MCF 10A (cell line): ENCODE measurements at regions of chr10 and their contacts with region 1.

Region 1: DNA sequence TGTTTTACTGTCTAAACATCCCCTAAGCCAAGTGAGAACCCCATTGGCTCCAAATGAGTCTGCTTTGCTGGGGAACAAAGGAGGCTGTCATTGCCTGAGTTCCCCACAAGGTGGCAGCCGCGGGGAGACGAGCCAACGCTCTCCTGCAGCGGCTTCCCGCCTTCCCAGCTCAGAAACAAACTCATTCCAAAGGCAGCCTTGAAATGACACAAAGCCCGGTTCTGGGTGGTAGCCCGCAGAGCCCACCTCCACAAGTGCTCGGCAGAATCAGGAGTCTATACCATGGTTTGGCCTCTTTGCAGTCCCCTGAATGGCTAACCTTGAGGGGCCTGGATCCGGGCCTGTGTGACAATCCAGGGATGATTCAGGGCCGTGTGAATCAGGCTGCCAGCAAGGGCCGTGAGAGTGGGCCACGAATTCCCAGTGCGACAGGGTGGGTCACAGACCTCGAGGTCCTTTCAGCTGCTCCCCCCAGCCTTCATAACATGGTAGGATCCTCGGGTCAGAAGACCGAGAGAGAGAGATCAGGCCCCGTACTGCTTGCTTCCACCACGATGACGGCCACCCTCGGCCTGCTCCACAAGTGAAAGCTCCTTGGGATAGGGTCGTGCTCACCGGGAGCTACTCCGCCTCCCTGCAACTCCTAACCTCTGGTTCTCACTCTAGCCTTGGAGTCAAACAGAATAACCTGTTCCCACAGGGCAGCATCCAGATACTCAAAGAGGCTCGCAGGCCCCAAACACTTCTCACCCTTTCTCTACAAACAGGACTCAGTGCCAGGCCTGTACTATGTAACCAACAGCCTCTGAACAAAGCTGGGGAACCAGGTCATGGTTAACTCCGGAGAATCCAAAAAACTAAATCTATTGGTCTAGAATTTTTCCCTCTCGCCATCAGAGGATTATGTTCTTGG is 79.6 kb downstream of the DLG5 start:
- DNase-seq: peak; percentile 79
- H3K4me3 Mint-ChIP-seq: peak overlapping the region; percentile 56
- H3K27ac Mint-ChIP-seq: peak overlapping the region; percentile 78
- H3K4me1 Mint-ChIP-seq: peaks cover 55% of the 10 kb centered on the region
- H3K27me3 Mint-ChIP-seq: no peaks in the 10 kb centered on the region
- CTCF ChIP-seq: peak; percentile 94

Region 2: GRCh38 chr10:77857254-77857653 is 10.3 kb after region 1 on chr10:
- CTCF ChIA-PET with region 1: interaction called, 16 read pairs
- POLR2A ChIA-PET with region 1: interaction called, 33 read pairs
- intact Hi-C with region 1: no loop called
- DNase-seq: peak; percentile 86
- H3K4me3 Mint-ChIP-seq: peak overlapping the region; percentile 61
- H3K27ac Mint-ChIP-seq: peak overlapping the region; percentile 85
- H3K4me1 Mint-ChIP-seq: peaks cover 32% of the 10 kb centered on the region
- H3K27me3 Mint-ChIP-seq: no peaks in the 10 kb centered on the region
- CTCF ChIP-seq: no peak

Region 3: GRCh38 chr10:77873536-77874380 is 26.8 kb after region 1 on chr10:
- CTCF ChIA-PET with region 1: interaction called, 5 read pairs
- POLR2A ChIA-PET with region 1: interaction called, 385 read pairs
- intact Hi-C with region 1: loop called (anchors 2 kb)
- DNase-seq: peak; percentile 98
- H3K4me3 Mint-ChIP-seq: peak overlapping the region; percentile 63
- H3K27ac Mint-ChIP-seq: peak overlapping the region; percentile 85
- H3K4me1 Mint-ChIP-seq: peaks cover 71% of the 10 kb centered on the region
- H3K27me3 Mint-ChIP-seq: no peaks in the 10 kb centered on the region
- CTCF ChIP-seq: no peak

Region 4: GRCh38 chr10:77889277-77889903 is 42.4 kb after region 1 on chr10:
- CTCF ChIA-PET with region 1: interaction called, 14 read pairs
- POLR2A ChIA-PET with region 1: interaction called, 903 read pairs
- intact Hi-C with region 1: no loop called
- DNase-seq: peak; percentile 50
- H3K4me3 Mint-ChIP-seq: peak overlapping the region; percentile 57
- H3K27ac Mint-ChIP-seq: peak overlapping the region; percentile 77
- H3K4me1 Mint-ChIP-seq: peaks cover 77% of the 10 kb centered on the region
- H3K27me3 Mint-ChIP-seq: no peaks in the 10 kb centered on the region
- CTCF ChIP-seq: no peak

Region 5: GRCh38 chr10:77898647-77899477 is 51.9 kb after region 1 on chr10:
- CTCF ChIA-PET with region 1: interaction called, 6 read pairs
- POLR2A ChIA-PET with region 1: interaction called, 903 read pairs
- intact Hi-C with region 1: loop called (anchors 2 kb)
- DNase-seq: peak; percentile 97
- H3K4me3 Mint-ChIP-seq: peak overlapping the region; percentile 75
- H3K27ac Mint-ChIP-seq: peak overlapping the region; percentile 87
- H3K4me1 Mint-ChIP-seq: peaks cover 55% of the 10 kb centered on the region
- H3K27me3 Mint-ChIP-seq: no peaks in the 10 kb centered on the region
- CTCF ChIP-seq: no peak

Region 6: GRCh38 chr10:77970869-77971803 is 124.2 kb after region 1 on chr10:
- CTCF ChIA-PET with region 1: interaction called, 13 read pairs
- POLR2A ChIA-PET with region 1: interaction called, 9 read pairs
- intact Hi-C with region 1: loop called (anchors 1 kb)
- DNase-seq: peak; percentile 89
- H3K4me3 Mint-ChIP-seq: no peak overlapping the region
- H3K27ac Mint-ChIP-seq: peak overlapping the region; percentile 49
- H3K4me1 Mint-ChIP-seq: peaks cover 14% of the 10 kb centered on the region
- H3K27me3 Mint-ChIP-seq: no peaks in the 10 kb centered on the region
- CTCF ChIP-seq: no peak

Region 7: DNA sequence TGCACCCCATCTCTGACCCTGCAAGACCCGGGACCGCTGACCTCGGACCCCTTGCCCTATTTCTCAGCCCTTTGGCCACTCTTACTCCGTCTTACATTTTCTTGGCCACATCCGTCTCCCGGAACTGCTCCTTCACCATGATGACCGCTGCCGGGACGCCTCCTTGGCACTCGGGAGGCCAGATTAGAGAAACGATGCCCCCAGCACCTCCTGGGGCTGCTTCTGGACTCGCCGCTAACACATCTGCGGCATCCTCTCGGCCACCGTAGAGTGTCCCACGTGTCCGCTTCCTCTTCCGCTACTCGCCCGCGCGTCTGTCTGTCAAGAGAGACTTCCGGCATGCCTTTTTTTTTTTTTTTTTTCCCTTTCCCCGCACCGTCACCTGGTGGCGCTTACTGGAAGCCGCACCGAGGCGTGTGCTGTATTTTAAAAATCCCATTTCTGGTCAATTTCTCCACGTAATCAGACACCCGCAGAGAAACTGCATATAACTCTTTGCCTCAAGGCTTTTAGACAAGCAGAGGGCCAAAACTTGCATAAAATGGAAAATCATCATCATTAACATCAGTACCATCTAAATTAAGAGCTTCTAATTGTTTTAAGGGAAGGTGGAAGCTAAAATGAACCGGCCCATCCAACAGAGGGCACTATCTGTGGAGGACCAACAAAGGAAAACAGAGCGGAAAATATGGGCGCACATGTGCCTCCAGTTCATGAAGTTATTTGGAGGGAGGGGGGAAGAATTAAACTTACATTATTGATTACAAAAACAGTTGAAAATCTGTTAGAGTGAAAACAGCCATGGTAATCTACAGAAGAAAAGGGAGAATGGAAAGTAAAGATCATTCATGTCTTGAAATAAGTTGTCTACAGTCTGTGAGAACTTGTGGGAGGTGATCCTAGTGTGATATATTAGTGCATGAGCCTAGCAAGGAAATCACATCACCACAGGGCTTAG is 182.6 kb after region 1 on chr10 and contains the start of gene POLR3A:
- CTCF ChIA-PET with region 1: interaction called, 4 read pairs
- POLR2A ChIA-PET with region 1: interaction called, 4 read pairs
- intact Hi-C with region 1: loop called (anchors 1 kb)
- DNase-seq: peak; percentile 95
- H3K4me3 Mint-ChIP-seq: peak within 1 kb of the TSS; percentile 95
- H3K27ac Mint-ChIP-seq: peak within 1 kb of the TSS; percentile 93
- H3K4me1 Mint-ChIP-seq: peaks cover 37% of the 10 kb centered on the region
- H3K27me3 Mint-ChIP-seq: no peaks in the 10 kb centered on the region
- CTCF ChIP-seq: peak; percentile 43
- total RNA-seq, gene POLR3A: 19.1 and 19.8 TPM in 2 replicates